Cardiac septum (tissue), 1 donor: ENCODE measurements at regions of chr17 and their contacts with region 1.

Region 1: GRCh38 chr17:75827252-75828115 is 16.7 kb downstream of the UNC13D start:
- DNase-seq: no peak

Region 2: GRCh38 chr17:75764711-75765421 is 62.6 kb before region 1 on chr17 and contains the start of gene GALK1:
- intact Hi-C with region 1: loop called (anchors 5 kb)
- DNase-seq: peak; percentile 95
- total RNA-seq, gene GALK1: 11.5 TPM

Region 3: GRCh38 chr17:75784473-75785015 is 42.9 kb before region 1 on chr17 and contains the start of gene UNK:
- intact Hi-C with region 1: loop called (anchors 5 kb)
- DNase-seq: peak; percentile 99
- total RNA-seq, gene UNK: 16.8 TPM